GM12878 (cell line): ENCODE measurements at regions of chr12 and their contacts with region 1.

Region 1: GRCh38 chr12:31406345-31406744 is 80.4 kb upstream of the SINHCAF start:
- DNase-seq: peak; percentile 65
- ATAC-seq: peak; percentile 77
- H3K4me3 ChIP-seq: peak overlapping the region; percentile 15
- H3K27ac ChIP-seq: peak overlapping the region; percentile 85
- H3K4me1 ChIP-seq: peaks cover 40% of the 10 kb centered on the region
- H3K27me3 ChIP-seq: no peaks in the 10 kb centered on the region
- CTCF ChIP-seq: no peak
- EP300 ChIP-seq: peak in 1 of 2 experiments; percentile 36; a peak in 1 of 4 replicates
- POLR2A ChIP-seq: no peak
- RAD21 ChIP-seq: peak; percentile 31

Region 2: DNA sequence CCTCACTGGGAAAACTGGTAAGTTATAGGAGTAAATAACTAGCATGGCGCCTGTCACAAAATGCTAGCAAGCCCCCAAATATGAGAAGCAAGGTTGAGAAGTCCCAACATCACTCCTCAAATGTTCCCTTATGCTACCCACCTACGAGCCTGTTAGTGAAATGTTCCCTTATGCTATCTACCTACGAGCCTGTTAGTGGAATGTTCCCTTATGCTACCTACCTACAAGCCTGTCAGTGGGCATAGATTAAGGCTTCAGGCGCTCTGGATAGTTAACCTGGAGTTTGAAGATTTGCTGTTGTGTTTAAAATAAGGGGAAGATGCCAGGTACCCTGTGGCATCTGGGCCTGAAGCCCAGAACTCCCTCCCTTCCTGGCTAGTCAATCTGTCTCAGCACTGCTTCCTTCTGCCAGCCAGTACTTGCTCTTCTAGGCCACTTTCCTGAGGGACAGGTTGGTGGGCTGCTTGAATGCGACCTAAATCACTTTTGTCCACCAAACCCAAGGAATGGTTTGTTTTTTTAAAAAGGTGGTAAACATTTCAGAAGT is 13.3 kb before region 1 on chr12:
- CTCF ChIA-PET with region 1: interaction called, 13 read pairs
- POLR2A ChIA-PET with region 1: interaction called, 4 read pairs
- RAD21 ChIA-PET with region 1: interaction called, 4 read pairs
- SMC1A ChIA-PET with region 1: interaction called, 3 read pairs
- in situ Hi-C with region 1: no loop called
- intact Hi-C with region 1: no loop called
- DNase-seq: no peak
- ATAC-seq: no peak
- H3K4me3 ChIP-seq: no peak overlapping the region
- H3K27ac ChIP-seq: no peak overlapping the region
- H3K4me1 ChIP-seq: no peaks in the 10 kb centered on the region
- H3K27me3 ChIP-seq: no peaks in the 10 kb centered on the region
- CTCF ChIP-seq: no peak
- EP300 ChIP-seq: no peak
- POLR2A ChIP-seq: no peak
- RAD21 ChIP-seq: no peak

Region 3: DNA sequence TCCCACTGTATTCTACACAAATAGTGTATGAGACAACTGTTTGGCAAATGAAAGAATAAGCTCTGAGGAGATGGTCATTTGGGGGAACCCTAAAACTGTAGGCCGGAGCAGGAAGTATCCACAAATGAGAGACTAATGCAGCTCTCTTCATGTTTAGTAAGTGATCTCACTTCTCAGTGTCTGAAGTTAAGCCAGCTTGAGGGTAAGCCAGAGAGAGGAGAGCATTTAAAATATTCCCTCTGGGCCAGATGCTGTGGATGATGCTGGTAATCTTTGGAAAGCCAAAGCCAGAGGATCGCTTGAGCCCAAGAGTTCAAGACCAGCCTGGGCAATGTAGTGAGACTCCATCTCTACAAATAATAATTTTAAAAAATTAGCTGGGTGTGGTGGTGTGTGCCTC is 50.2 kb after region 1 on chr12:
- CTCF ChIA-PET with region 1: no interaction called
- POLR2A ChIA-PET with region 1: no interaction called
- RAD21 ChIA-PET with region 1: no interaction called
- SMC1A ChIA-PET with region 1: no interaction called
- in situ Hi-C with region 1: no loop called
- intact Hi-C with region 1: no loop called
- DNase-seq: no peak
- ATAC-seq: no peak
- H3K4me3 ChIP-seq: no peak overlapping the region
- H3K27ac ChIP-seq: no peak overlapping the region
- H3K4me1 ChIP-seq: no peaks in the 10 kb centered on the region
- H3K27me3 ChIP-seq: no peaks in the 10 kb centered on the region
- CTCF ChIP-seq: no peak
- EP300 ChIP-seq: no peak
- POLR2A ChIP-seq: no peak
- RAD21 ChIP-seq: no peak

Region 4: DNA sequence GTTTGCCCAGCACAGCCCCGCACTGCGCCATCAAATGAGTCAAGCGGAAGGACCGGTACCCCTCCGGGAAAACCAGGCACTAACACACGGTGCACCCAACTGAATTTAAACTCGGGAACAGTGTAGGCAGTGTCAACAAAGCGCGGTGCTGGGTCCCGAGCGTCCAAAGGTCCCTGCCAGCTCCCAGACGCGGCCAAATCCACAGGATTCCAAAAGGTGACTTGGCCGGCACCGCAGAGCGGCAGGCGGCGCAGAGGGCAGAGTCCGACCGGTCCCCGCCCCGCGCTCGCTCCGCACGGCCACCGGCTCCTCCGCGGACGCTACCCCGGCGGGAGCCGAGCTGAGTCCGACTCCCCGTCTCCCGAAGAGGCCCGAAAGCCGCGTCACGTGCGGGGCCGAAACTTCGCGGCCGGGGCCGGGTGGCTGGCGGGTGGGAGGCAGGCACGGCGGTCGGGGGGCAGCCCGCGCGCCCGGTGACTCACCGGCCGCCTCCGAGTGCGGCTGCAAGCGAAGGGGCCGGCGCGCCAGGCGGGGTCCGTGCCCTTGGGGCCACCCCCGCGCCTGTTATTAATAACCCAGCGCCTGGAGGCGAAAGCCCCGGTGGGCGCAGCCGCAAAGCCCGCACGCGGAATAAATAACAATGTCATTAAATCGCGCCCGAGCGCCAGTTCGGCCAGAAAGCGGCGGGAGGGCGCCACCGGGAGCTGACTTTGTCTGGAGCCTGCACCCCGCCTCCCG is 183.7 kb after region 1 on chr12:
- CTCF ChIA-PET with region 1: no interaction called
- POLR2A ChIA-PET with region 1: no interaction called
- RAD21 ChIA-PET with region 1: interaction called, 3 read pairs
- SMC1A ChIA-PET with region 1: no interaction called
- in situ Hi-C with region 1: no loop called
- intact Hi-C with region 1: loop called (anchors 5 kb)
- DNase-seq: no peak
- ATAC-seq: peak; percentile 64
- H3K4me3 ChIP-seq: peak overlapping the region; percentile 87
- H3K27ac ChIP-seq: peak overlapping the region; percentile 93
- H3K4me1 ChIP-seq: peaks cover 27% of the 10 kb centered on the region
- H3K27me3 ChIP-seq: no peaks in the 10 kb centered on the region
- CTCF ChIP-seq: 0 out of 6 replicates have a peak, but pooled peaks of 1 of the 3 experiments have one; percentile 5
- EP300 ChIP-seq: no peak
- POLR2A ChIP-seq: peak; percentile 65; the same call in 1 of the 2 replicates
- RAD21 ChIP-seq: peak; percentile 34; the same call in 1 of the 2 replicates

Region 5: GRCh38 chr12:31659087-31659933 is 253.0 kb after region 1 on chr12 and contains the start of gene ETFBKMT:
- CTCF ChIA-PET with region 1: interaction called, 37 read pairs
- POLR2A ChIA-PET with region 1: interaction called, 3 read pairs
- RAD21 ChIA-PET with region 1: interaction called, 4 read pairs
- SMC1A ChIA-PET with region 1: no interaction called
- in situ Hi-C with region 1: no loop called
- intact Hi-C with region 1: loop called (anchors 5 kb)
- DNase-seq: peak; percentile 90
- ATAC-seq: peak; percentile 99
- H3K4me3 ChIP-seq: peak within 1 kb of the TSS; percentile 85
- H3K27ac ChIP-seq: peak within 1 kb of the TSS; percentile 87
- H3K4me1 ChIP-seq: peaks cover 5% of the 10 kb centered on the region; the same call in 1 of the 2 replicates
- H3K27me3 ChIP-seq: no peaks in the 10 kb centered on the region
- CTCF ChIP-seq: peak; percentile 18 to 34 (median 22); a peak in 4 of 6 replicates
- EP300 ChIP-seq: no peak
- POLR2A ChIP-seq: peak; percentile 54; the same call in 1 of the 2 replicates
- RAD21 ChIP-seq: no peak
- polyA plus RNA-seq, gene ETFBKMT: 0.49 to 0.79 TPM

Region 6: GRCh38 chr12:32069071-32069470 is 662.7 kb after region 1 on chr12:
- CTCF ChIA-PET with region 1: no interaction called
- POLR2A ChIA-PET with region 1: no interaction called
- RAD21 ChIA-PET with region 1: no interaction called
- SMC1A ChIA-PET with region 1: no interaction called
- in situ Hi-C with region 1: no loop called
- intact Hi-C with region 1: loop called (anchors 10 kb)
- DNase-seq: no peak
- ATAC-seq: no peak
- H3K4me3 ChIP-seq: no peak overlapping the region
- H3K27ac ChIP-seq: no peak overlapping the region
- H3K4me1 ChIP-seq: no peaks in the 10 kb centered on the region
- H3K27me3 ChIP-seq: no peaks in the 10 kb centered on the region
- CTCF ChIP-seq: no peak
- EP300 ChIP-seq: no peak
- POLR2A ChIP-seq: no peak
- RAD21 ChIP-seq: no peak